ENCODE measurements at regions of chr1 and their contacts with region 1.

Region 1: GRCh38 chr1:99481391-99481996 is 164.4 kb upstream of the PALMD start:
- DNase-seq: peak in 5 of 9 experiments; percentile 5 to 58 (median 38)
- ATAC-seq: no peak
- H3K4me3 ChIP-seq: no peak overlapping the region
- H3K4me3 Mint-ChIP-seq: no peak overlapping the region
- H3K27ac ChIP-seq: no peak overlapping the region
- H3K27ac Mint-ChIP-seq: no peak overlapping the region
- H3K4me1 ChIP-seq: no peaks in the 10 kb centered on the region
- H3K4me1 Mint-ChIP-seq: no peaks in the 10 kb centered on the region
- H3K27me3 ChIP-seq: no peaks in the 10 kb centered on the region
- H3K27me3 Mint-ChIP-seq: peaks cover 21% of the 10 kb centered on the region
- CTCF ChIP-seq: peak; percentile 63

Region 2: GRCh38 chr1:98749152-98749756 is 732.2 kb before region 1 on chr1:
- CTCF ChIA-PET with region 1: interaction called, 11 read pairs
- POLR2A ChIA-PET with region 1: no interaction called
- intact Hi-C with region 1: loop called (anchors 2 kb)
- DNase-seq: peak in 2 of 9 experiments; percentile 18 to 30
- ATAC-seq: no peak
- H3K4me3 ChIP-seq: no peak overlapping the region
- H3K4me3 Mint-ChIP-seq: no peak overlapping the region
- H3K27ac ChIP-seq: no peak overlapping the region
- H3K27ac Mint-ChIP-seq: no peak overlapping the region
- H3K4me1 ChIP-seq: no peaks in the 10 kb centered on the region
- H3K4me1 Mint-ChIP-seq: no peaks in the 10 kb centered on the region
- H3K27me3 ChIP-seq: no peaks in the 10 kb centered on the region
- H3K27me3 Mint-ChIP-seq: no peaks in the 10 kb centered on the region
- CTCF ChIP-seq: peak; percentile 46

Region 3: GRCh38 chr1:99445486-99445885 is 36.0 kb before region 1 on chr1:
- CTCF ChIA-PET with region 1: no interaction called
- POLR2A ChIA-PET with region 1: no interaction called
- intact Hi-C with region 1: loop called in 1 of 2 experiments (anchors 1 kb)
- DNase-seq: no peak
- ATAC-seq: no peak
- H3K4me3 ChIP-seq: no peak overlapping the region
- H3K4me3 Mint-ChIP-seq: no peak overlapping the region
- H3K27ac ChIP-seq: no peak overlapping the region
- H3K27ac Mint-ChIP-seq: no peak overlapping the region
- H3K4me1 ChIP-seq: no peaks in the 10 kb centered on the region
- H3K4me1 Mint-ChIP-seq: no peaks in the 10 kb centered on the region
- H3K27me3 ChIP-seq: no peaks in the 10 kb centered on the region
- H3K27me3 Mint-ChIP-seq: no peaks in the 10 kb centered on the region
- CTCF ChIP-seq: no peak

Region 4: GRCh38 chr1:99717005-99717404 is 235.5 kb after region 1 on chr1:
- CTCF ChIA-PET with region 1: no interaction called
- POLR2A ChIA-PET with region 1: no interaction called
- intact Hi-C with region 1: no loop called
- DNase-seq: no peak
- ATAC-seq: no peak
- H3K4me3 ChIP-seq: no peak overlapping the region
- H3K4me3 Mint-ChIP-seq: no peak overlapping the region
- H3K27ac ChIP-seq: no peak overlapping the region
- H3K27ac Mint-ChIP-seq: no peak overlapping the region
- H3K4me1 ChIP-seq: no peaks in the 10 kb centered on the region
- H3K4me1 Mint-ChIP-seq: no peaks in the 10 kb centered on the region
- H3K27me3 ChIP-seq: no peaks in the 10 kb centered on the region
- H3K27me3 Mint-ChIP-seq: no peaks in the 10 kb centered on the region
- CTCF ChIP-seq: no peak

Measured in CD8-positive, alpha-beta T cell (primary cell).